Sigmoid colon (tissue), 7 donors: ENCODE measurements at regions of chr3 and their contacts with region 1.

Region 1: DNA sequence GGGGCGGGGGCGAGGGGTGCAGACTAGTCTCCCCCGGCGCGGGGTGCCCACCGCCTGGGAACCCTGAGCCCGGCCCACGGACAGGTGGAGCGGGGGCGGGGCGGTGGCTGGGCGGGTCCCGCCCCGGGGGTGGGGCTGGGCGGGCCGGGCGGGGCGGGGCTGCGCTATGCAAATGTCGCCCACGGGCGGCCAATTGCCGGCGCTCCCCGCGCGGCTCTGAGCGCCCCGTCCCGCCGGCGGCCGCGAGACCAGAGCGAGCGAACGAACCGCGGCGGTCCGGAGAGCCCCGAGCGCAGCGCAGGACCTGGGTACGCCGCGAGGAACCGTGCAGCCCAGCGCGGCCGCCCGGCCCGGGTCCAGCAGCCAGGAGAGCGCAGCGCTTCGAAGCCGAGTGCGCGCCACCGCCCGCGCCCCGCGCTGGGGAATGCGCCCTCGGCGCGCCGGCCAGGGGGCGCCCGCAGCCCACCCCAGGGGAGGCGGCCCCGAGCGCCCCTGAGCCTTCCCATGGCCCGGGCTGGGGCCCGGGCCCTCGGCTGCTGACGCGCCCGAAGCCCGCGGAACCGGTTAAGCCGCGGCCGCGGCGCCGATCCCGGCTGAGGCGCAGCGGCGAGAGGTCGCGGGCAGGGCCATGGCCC is at the start of gene SEMA3F:
- DNase-seq: peak; percentile 74
- H3K4me3 ChIP-seq: peak within 1 kb of the TSS; percentile 23 to 65 (median 58)
- H3K27ac ChIP-seq: peak within 1 kb of the TSS; percentile 60 to 90 (median 86)
- H3K4me1 ChIP-seq: peaks cover 0 to 51% (median 48%) of the 10 kb centered on the region in 4 donors
- H3K27me3 ChIP-seq: peaks cover 0 to 7% (median 4%) of the 10 kb centered on the region in 3 donors
- CTCF ChIP-seq: no peak
- EP300 ChIP-seq: no peak
- POLR2A ChIP-seq: no peak
- total RNA-seq, gene SEMA3F: 5.1 to 11.4 (median 8.0) TPM

Region 2: GRCh38 chr3:50121416-50122032 is 33.4 kb before region 1 on chr3:
- intact Hi-C with region 1: loop called (anchors 2 kb)
- DNase-seq: peak; percentile 89
- H3K4me3 ChIP-seq: no peak overlapping the region
- H3K27ac ChIP-seq: no peak overlapping the region
- H3K4me1 ChIP-seq: peaks cover 0 to 36% (median 28%) of the 10 kb centered on the region in 4 donors
- H3K27me3 ChIP-seq: no peaks in the 10 kb centered on the region
- CTCF ChIP-seq: peak; percentile 65 to 90 (median 85)
- EP300 ChIP-seq: no peak
- POLR2A ChIP-seq: no peak